ENCODE measurements at regions of chr16 and their contacts with region 1.

Region 1: DNA sequence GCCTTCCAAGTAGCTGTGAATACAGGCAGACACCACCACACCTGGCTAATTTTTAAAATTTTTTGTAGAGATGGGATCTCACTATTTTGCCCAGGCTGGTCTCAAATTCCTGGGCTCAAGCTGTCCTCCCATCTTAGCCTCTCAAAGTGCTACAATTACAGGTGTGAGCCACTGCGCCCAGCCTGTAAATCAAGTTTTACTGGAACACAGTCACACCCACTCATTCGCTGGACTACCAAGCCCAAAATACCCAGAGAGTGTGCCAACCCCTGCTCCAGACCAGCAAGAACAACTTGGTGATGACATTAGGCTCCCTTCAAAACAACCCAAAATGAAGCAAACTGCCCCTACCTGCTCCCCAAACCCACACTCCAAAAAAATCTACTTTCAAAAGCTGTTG is 36.0 kb downstream of the TVP23A start:
- DNase-seq: no peak
- ATAC-seq: no peak
- H3K4me3 ChIP-seq: no peak overlapping the region
- H3K27ac ChIP-seq: no peak overlapping the region
- H3K4me1 ChIP-seq: peaks cover 14% of the 10 kb centered on the region
- H3K27me3 ChIP-seq: no peaks in the 10 kb centered on the region
- CTCF ChIP-seq: no peak
- EP300 ChIP-seq: no peak
- POLR2A ChIP-seq: no peak
- RAD21 ChIP-seq: no peak

Region 2: DNA sequence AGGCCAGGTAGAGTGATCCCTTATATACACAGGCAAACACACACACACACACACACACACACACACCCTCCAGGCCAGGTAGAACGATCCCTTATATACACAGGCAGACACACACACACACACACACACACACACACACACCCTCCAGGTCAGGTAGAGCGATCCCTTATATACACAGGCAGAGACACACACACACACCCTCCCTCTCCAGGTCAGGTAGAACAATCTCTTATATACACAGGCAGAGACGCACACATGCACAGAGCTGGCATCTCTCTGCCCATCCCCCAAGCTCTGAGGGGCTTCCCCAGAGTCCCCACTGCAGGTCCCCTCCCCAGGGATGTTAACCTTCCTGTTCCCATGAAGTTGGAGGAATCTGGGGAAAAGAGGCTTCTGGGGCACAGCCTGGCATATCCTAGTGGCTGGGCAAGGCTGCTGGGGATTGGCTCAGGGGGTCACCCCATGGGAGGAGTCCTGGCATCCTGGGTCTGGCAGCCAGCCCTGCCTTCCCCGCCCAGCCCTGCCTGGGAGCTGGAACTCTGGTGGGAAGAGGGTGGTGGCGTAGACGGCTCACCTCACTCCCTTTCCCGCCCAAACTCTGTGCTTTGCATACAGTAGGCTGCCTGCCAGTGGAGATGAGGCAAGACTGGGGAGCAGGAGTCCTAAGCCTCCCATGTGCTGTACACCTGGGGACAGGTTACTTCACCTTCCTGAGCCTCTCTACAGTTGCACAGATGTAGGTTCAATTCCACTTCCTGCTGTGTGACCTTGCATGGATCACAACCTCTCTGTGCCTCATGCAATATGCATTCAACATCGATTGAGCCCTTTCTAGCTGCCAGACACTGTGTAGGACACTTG is 129.7 kb before region 1 on chr16:
- CTCF ChIA-PET with region 1: no interaction called
- POLR2A ChIA-PET with region 1: no interaction called
- RAD21 ChIA-PET with region 1: no interaction called
- SMC1A ChIA-PET with region 1: no interaction called
- in situ Hi-C with region 1: no loop called
- intact Hi-C with region 1: no loop called
- DNase-seq: no peak
- ATAC-seq: no peak; the same call in 2 of the 3 replicates
- H3K4me3 ChIP-seq: no peak overlapping the region
- H3K27ac ChIP-seq: no peak overlapping the region
- H3K4me1 ChIP-seq: peaks cover 4% of the 10 kb centered on the region; the same call in 1 of the 2 replicates
- H3K27me3 ChIP-seq: no peaks in the 10 kb centered on the region
- CTCF ChIP-seq: no peak
- EP300 ChIP-seq: no peak
- POLR2A ChIP-seq: no peak
- RAD21 ChIP-seq: no peak

Region 3: GRCh38 chr16:10806698-10807097 is 24.1 kb after region 1 on chr16:
- CTCF ChIA-PET with region 1: interaction called, 5 read pairs
- POLR2A ChIA-PET with region 1: interaction called, 12 read pairs
- RAD21 ChIA-PET with region 1: interaction called, 4 read pairs
- SMC1A ChIA-PET with region 1: interaction called, 9 read pairs
- in situ Hi-C with region 1: no loop called
- intact Hi-C with region 1: no loop called
- DNase-seq: no peak
- ATAC-seq: peak; percentile 37
- H3K4me3 ChIP-seq: no peak overlapping the region
- H3K27ac ChIP-seq: 0 out of 2 replicates have a peak overlapping the region, but pooled peaks have one; percentile 2
- H3K4me1 ChIP-seq: peaks cover 59% of the 10 kb centered on the region
- H3K27me3 ChIP-seq: no peaks in the 10 kb centered on the region
- CTCF ChIP-seq: no peak
- EP300 ChIP-seq: no peak
- POLR2A ChIP-seq: no peak
- RAD21 ChIP-seq: no peak

Region 4: DNA sequence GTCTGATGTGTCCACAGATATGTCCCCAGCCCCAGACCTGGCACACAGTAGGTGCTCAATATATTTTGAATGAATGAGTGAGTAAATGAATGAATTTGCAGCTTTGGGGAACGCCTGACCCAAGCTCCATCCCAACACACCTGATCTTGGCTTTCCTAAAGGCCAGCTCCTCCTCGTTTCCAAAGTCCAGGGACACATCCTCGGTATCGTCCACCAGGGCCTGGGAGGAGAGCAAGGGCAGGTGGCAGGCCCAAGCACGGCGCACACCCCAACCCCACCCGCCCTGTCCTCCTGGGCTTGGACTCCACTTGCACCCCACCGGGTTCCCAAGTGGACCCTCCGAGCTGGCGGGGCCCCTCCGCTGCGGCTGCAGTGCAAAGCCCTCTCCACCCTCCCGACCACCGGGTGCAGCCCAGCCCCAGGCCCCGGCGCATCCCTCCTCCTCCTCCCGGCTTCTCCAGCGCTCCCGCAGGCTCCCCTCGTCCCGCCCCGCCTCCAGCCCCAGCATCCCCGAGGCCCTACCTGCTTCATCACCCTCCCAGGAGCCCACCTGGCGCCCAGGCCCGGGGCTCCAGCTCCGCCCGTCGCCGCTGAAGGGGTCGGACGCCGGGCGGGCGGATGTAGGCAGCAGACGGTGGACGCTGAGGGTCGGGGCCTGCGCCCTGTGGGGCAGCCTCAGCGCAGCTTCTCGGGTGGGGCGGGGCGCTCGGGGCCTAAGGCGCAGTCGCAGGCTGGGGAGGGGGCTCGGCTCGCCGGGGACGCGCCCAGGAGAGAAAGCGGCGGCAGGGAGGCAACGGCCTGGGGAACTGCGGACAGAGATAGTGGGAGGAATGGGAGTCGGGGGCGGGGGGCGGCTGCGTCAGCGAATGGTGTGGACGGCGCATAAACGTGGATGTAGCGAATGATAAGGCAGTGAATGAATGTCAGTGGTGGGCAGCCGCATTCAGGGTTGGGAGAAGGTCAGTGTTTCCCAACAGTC is 35.6 kb after region 1 on chr16 and contains the start of gene TVP23A:
- CTCF ChIA-PET with region 1: interaction called, 3 read pairs
- POLR2A ChIA-PET with region 1: interaction called, 8 read pairs
- RAD21 ChIA-PET with region 1: interaction called, 3 read pairs
- SMC1A ChIA-PET with region 1: interaction called, 12 read pairs
- in situ Hi-C with region 1: no loop called
- intact Hi-C with region 1: no loop called
- DNase-seq: no peak
- ATAC-seq: no peak
- H3K4me3 ChIP-seq: no peak within 1 kb of the TSS
- H3K27ac ChIP-seq: peak within 1 kb of the TSS; percentile 38; the same call in 1 of the 2 replicates
- H3K4me1 ChIP-seq: peaks cover 37% of the 10 kb centered on the region
- H3K27me3 ChIP-seq: no peaks in the 10 kb centered on the region
- CTCF ChIP-seq: no peak
- EP300 ChIP-seq: no peak
- POLR2A ChIP-seq: no peak
- RAD21 ChIP-seq: no peak
- polyA plus RNA-seq, gene TVP23A: 4.6 to 6.4 TPM

Measured in GM12878 (cell line).